Natural killer cell (primary cell): ENCODE measurements at regions of chr1 and their contacts with region 1.

Region 1: DNA sequence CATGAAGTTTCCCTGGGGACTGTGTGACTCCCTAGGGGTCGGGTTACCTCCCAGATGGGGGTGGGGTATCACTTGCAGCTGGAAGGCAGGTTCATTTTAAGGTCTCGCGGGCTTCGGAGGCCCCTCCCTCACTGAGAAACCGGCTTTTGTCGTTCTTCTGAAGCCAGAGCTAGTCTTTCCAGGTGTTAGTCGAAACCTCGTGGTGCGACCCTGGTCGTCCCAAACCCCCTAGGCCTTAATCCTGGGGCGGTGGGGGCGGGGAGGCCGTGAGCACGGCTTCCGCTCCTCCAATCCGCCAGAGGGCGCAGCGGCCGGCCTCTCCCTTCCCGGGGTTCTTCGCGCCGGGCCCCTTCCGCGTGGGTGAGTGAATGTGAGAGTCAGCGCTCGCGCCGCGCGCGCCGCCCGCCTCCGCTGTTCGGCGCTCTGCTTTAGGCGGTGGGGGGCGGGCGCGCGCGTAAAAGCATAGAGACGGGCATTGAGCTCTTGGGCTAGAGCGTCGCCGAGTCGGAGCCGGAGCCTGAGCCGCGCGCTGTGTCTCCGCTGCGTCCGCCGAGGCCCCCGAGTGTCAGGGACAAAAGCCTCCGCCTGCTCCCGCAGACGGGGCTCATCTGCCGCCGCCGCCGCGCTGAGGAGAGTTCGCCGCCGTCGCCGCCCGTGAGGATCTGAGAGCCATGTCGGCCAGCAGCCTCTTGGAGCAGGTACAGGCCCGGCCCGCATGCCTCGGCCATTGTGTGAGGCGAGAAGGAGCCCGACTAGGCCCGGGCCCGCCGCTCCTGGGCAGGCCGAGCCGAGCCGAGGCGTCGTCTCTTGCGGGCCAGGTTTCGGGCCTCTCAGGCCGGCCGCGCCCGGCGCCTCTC is at the start of gene YTHDF2:
- DNase-seq: peak; percentile 96 to 99
- ATAC-seq: peak; percentile 93 to 99 (median 94)
- H3K4me3 ChIP-seq: peak within 1 kb of the TSS; percentile 92
- H3K4me3 Mint-ChIP-seq: peak within 1 kb of the TSS; percentile 95
- H3K27ac ChIP-seq: peak within 1 kb of the TSS; percentile 90
- H3K27ac Mint-ChIP-seq: peak within 1 kb of the TSS; percentile 90 to 93
- H3K4me1 ChIP-seq: peaks cover 27% of the 10 kb centered on the region
- H3K4me1 Mint-ChIP-seq: peaks cover 35 to 39% of the 10 kb centered on the region in 2 donors
- H3K27me3 ChIP-seq: no peaks in the 10 kb centered on the region
- H3K27me3 Mint-ChIP-seq: no peaks in the 10 kb centered on the region
- CTCF ChIP-seq: peak; percentile 82
- total RNA-seq, gene YTHDF2: 78.9 to 98.3 (median 97.9) TPM

Region 2: DNA sequence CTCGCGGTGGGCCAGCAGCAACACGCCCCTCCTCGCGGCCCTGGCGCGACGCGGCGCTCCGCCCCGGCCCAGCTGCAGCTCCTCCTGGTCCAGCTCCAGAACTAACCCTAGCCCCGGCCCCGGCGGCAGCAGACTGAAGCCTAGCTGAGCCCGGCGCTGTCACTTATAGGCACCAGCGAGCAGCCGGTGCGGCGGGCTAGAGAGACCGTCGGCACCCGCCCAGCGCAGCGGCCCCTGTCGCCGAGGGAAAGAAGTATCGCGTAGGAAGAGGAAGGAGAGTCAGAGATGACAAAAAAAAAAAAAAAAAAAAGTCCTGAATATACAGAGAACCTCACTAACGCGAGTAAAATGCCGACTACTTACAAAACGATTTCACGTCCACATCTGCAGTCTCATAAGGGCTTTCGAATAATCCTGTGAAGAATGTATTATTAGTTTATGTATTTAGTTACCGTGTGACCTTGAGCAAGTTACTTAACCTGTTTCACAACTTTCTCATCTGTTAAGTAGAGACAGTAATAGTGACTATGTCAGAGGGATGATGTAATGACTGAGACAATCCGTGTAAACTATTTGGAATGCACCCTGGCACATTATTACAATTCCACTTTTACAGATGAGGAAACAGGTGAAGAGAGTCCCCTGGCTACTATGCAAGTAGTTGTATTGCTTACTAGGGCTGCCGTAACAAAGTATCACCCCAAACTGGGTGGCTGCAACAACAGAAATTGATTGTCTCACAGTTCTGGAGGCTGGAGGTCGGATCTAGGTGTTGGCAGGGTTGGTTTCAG is 1581.5 kb before region 1 on chr1 and contains the start of gene SLC9A1:
- intact Hi-C with region 1: loop called (anchors 10 kb)
- DNase-seq: peak; percentile 96
- ATAC-seq: peak; percentile 91 to 97 (median 93)
- H3K4me3 ChIP-seq: peak within 1 kb of the TSS; percentile 88
- H3K4me3 Mint-ChIP-seq: peak within 1 kb of the TSS; percentile 95
- H3K27ac ChIP-seq: peak within 1 kb of the TSS; percentile 91
- H3K27ac Mint-ChIP-seq: peak within 1 kb of the TSS; percentile 96 to 98
- H3K4me1 ChIP-seq: peaks cover 36% of the 10 kb centered on the region
- H3K4me1 Mint-ChIP-seq: peaks cover 40 to 48% of the 10 kb centered on the region in 2 donors
- H3K27me3 ChIP-seq: no peaks in the 10 kb centered on the region
- H3K27me3 Mint-ChIP-seq: no peaks in the 10 kb centered on the region
- CTCF ChIP-seq: peak; percentile 79
- total RNA-seq, gene SLC9A1: 26.5 to 37.4 (median 29.4) TPM

Region 3: GRCh38 chr1:28437934-28438699 is 298.6 kb before region 1 on chr1:
- intact Hi-C with region 1: no loop called
- DNase-seq: no peak
- ATAC-seq: peak; percentile 44 to 53 (median 45)
- H3K4me3 ChIP-seq: no peak overlapping the region
- H3K4me3 Mint-ChIP-seq: no peak overlapping the region
- H3K27ac ChIP-seq: no peak overlapping the region
- H3K27ac Mint-ChIP-seq: peak overlapping the region; percentile 77 to 84
- H3K4me1 ChIP-seq: peaks cover 3% of the 10 kb centered on the region
- H3K4me1 Mint-ChIP-seq: peaks cover 12% of the 10 kb centered on the region in 2 donors
- H3K27me3 ChIP-seq: no peaks in the 10 kb centered on the region
- H3K27me3 Mint-ChIP-seq: no peaks in the 10 kb centered on the region
- CTCF ChIP-seq: no peak

Region 4: GRCh38 chr1:28505406-28506187 is 231.1 kb before region 1 on chr1 and contains the start of gene RCC1:
- intact Hi-C with region 1: loop called (anchors 2 kb)
- DNase-seq: peak; percentile 87 to 99
- ATAC-seq: peak; percentile 93 to 96 (median 95)
- H3K4me3 ChIP-seq: peak within 1 kb of the TSS; percentile 80
- H3K4me3 Mint-ChIP-seq: peak within 1 kb of the TSS; percentile 99
- H3K27ac ChIP-seq: peak within 1 kb of the TSS; percentile 77
- H3K27ac Mint-ChIP-seq: peak within 1 kb of the TSS; percentile 97 to 99
- H3K4me1 ChIP-seq: peaks cover 43% of the 10 kb centered on the region
- H3K4me1 Mint-ChIP-seq: peaks cover 47 to 50% of the 10 kb centered on the region in 2 donors
- H3K27me3 ChIP-seq: no peaks in the 10 kb centered on the region
- H3K27me3 Mint-ChIP-seq: no peaks in the 10 kb centered on the region
- CTCF ChIP-seq: no peak
- total RNA-seq, gene RCC1: 15.9 to 23.7 (median 19.2) TPM

Region 5: GRCh38 chr1:28642847-28643635 is 93.6 kb before region 1 on chr1 and contains the start of gene TAF12:
- intact Hi-C with region 1: loop called (anchors 1 kb)
- DNase-seq: peak; percentile 82 to 98
- ATAC-seq: peak; percentile 78 to 93 (median 85)
- H3K4me3 ChIP-seq: peak within 1 kb of the TSS; percentile 71
- H3K4me3 Mint-ChIP-seq: peak within 1 kb of the TSS; percentile 100
- H3K27ac ChIP-seq: peak within 1 kb of the TSS; percentile 98
- H3K27ac Mint-ChIP-seq: peak within 1 kb of the TSS; percentile 98 to 99
- H3K4me1 ChIP-seq: peaks cover 34% of the 10 kb centered on the region
- H3K4me1 Mint-ChIP-seq: peaks cover 36 to 46% of the 10 kb centered on the region in 2 donors
- H3K27me3 ChIP-seq: no peaks in the 10 kb centered on the region
- H3K27me3 Mint-ChIP-seq: no peaks in the 10 kb centered on the region
- CTCF ChIP-seq: peak; percentile 15
- total RNA-seq, gene TAF12: 17.9 to 23.8 (median 23.1) TPM

Region 6: GRCh38 chr1:28668191-28668955 is 68.3 kb before region 1 on chr1 and contains the start of gene GMEB1:
- intact Hi-C with region 1: loop called (anchors 2 kb)
- DNase-seq: peak; percentile 85 to 91
- ATAC-seq: peak; percentile 66 to 83 (median 78)
- H3K4me3 ChIP-seq: peak within 1 kb of the TSS; percentile 94
- H3K4me3 Mint-ChIP-seq: peak within 1 kb of the TSS; percentile 93
- H3K27ac ChIP-seq: peak within 1 kb of the TSS; percentile 97
- H3K27ac Mint-ChIP-seq: peak within 1 kb of the TSS; percentile 91 to 97
- H3K4me1 ChIP-seq: peaks cover 22% of the 10 kb centered on the region
- H3K4me1 Mint-ChIP-seq: peaks cover 14 to 15% of the 10 kb centered on the region in 2 donors
- H3K27me3 ChIP-seq: no peaks in the 10 kb centered on the region
- H3K27me3 Mint-ChIP-seq: no peaks in the 10 kb centered on the region
- CTCF ChIP-seq: no peak
- total RNA-seq, gene GMEB1: 26.1 to 29.1 (median 28.3) TPM

Region 7: GRCh38 chr1:28792644-28793121 is 56.0 kb after region 1 on chr1:
- intact Hi-C with region 1: no loop called
- DNase-seq: no peak
- ATAC-seq: no peak
- H3K4me3 ChIP-seq: no peak overlapping the region
- H3K4me3 Mint-ChIP-seq: no peak overlapping the region
- H3K27ac ChIP-seq: no peak overlapping the region
- H3K27ac Mint-ChIP-seq: no peak overlapping the region
- H3K4me1 ChIP-seq: no peaks in the 10 kb centered on the region
- H3K4me1 Mint-ChIP-seq: no peaks in the 10 kb centered on the region
- H3K27me3 ChIP-seq: no peaks in the 10 kb centered on the region
- H3K27me3 Mint-ChIP-seq: peaks cover 7% of the 10 kb centered on the region in 2 donors
- CTCF ChIP-seq: no peak

Region 8: DNA sequence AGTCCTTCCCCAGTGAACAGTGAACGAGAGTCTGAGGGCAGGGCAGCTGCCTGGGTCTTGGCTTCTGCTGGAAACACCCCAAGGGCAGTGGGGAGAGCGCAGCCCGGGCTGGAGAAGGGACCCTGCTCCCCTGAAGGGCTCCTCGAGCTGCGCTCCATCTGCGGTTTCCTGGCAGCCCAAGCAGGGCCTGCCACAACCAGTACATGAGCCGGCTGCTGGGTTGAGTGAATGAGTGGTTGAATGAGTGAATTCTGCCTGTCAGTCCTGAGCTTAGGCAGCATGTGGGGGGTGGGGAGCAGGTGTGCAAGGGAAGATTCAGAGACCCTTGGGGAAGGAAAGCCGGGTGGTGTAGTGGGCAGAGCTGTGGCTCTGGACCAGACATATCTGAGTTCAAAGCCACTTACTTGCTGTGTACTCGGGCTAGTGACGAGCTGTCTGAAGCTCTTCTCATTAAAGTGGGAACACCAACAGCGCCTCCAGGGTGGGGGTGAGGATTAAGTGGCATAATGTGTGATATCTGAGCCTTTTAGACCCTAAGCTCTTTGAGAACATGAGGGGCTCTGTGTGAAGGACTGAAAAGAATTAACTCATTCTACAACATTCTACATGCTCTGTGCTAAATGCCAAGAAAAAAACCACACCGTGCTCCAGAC is 79.0 kb after region 1 on chr1:
- intact Hi-C with region 1: no loop called
- DNase-seq: no peak
- ATAC-seq: peak in 1 of 3 donors; percentile 22
- H3K4me3 ChIP-seq: no peak overlapping the region
- H3K4me3 Mint-ChIP-seq: no peak overlapping the region
- H3K27ac ChIP-seq: no peak overlapping the region
- H3K27ac Mint-ChIP-seq: no peak overlapping the region
- H3K4me1 ChIP-seq: no peaks in the 10 kb centered on the region
- H3K4me1 Mint-ChIP-seq: no peaks in the 10 kb centered on the region
- H3K27me3 ChIP-seq: peaks cover 10% of the 10 kb centered on the region
- H3K27me3 Mint-ChIP-seq: peaks cover 34 to 42% of the 10 kb centered on the region in 2 donors
- CTCF ChIP-seq: no peak